Naive thymus-derived CD4-positive, alpha-beta T cell (primary cell): ENCODE measurements at regions of chr14 and their contacts with region 1.

Region 1: DNA sequence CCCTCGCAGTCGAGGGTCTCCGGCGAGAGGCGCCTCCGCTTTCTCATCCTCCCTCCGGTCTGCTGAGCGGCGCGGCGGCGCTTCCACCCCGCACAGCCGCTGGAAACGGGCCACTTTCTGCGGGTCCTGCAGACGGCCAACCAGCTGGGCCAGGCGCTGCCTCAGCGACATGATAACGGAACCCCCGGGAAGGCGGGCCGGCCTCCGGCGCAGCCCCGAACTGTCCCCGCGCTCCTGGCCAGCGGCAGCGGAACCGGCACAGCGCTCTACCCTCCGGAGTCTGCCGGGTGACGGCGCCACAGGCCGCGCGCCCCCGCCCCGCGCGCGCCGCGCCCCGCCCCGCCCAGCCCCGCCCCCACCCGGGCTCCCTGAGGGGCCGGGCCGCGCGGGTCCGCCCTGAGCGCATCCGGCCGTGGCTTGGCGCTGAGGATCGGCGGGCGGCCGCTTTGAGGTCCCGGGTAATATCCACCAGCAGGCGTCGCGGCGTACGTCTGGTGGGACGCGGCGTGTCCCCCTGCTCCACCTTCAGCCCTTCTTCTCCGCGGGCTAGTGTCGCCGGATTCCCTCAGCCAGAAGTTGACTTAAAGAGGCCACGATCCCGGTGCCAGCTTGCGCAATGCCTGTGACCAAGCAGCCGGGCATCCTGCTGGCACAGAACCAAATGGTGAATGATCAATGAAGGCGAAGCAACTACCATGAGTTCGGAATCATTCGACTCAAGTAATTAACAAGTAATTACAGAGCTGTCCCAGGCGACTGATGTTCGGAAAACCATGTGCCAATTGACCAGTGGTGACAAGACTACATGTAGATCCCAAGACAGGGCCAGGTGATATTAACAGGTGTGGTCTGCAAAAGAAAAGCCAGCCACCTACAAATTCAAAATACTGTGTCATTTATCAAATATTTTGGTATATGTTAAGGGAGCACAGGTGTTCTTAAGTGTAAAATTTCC is at the start of gene SGPP1:
- DNase-seq: peak; percentile 60 to 83 (median 77)
- ATAC-seq: peak; percentile 95
- H3K4me3 ChIP-seq: peak within 1 kb of the TSS; percentile 99
- H3K4me3 Mint-ChIP-seq: peak within 1 kb of the TSS; percentile 97 to 100 (median 99)
- H3K27ac ChIP-seq: peak within 1 kb of the TSS; percentile 89
- H3K27ac Mint-ChIP-seq: peak within 1 kb of the TSS; percentile 94 to 99 (median 97)
- H3K4me1 ChIP-seq: peaks cover 11 to 16% of the 10 kb centered on the region in 2 donors
- H3K4me1 Mint-ChIP-seq: peaks cover 29 to 51% (median 44%) of the 10 kb centered on the region in 7 donors
- H3K27me3 ChIP-seq: no peaks in the 10 kb centered on the region
- H3K27me3 Mint-ChIP-seq: peaks cover 0 to 22% (median 0%) of the 10 kb centered on the region in 5 donors
- total RNA-seq, gene SGPP1: 15.1 to 17.7 (median 15.7) TPM

Region 2: GRCh38 chr14:63632932-63633514 is 95.0 kb before region 1 on chr14:
- CTCF ChIA-PET with region 1: interaction called, 9 read pairs
- POLR2A ChIA-PET with region 1: interaction called, 5 read pairs
- intact Hi-C with region 1: loop called in 1 of 2 experiments (anchors 1 kb)
- DNase-seq: peak in 6 of 9 donors; percentile 31 to 65 (median 58)
- ATAC-seq: peak; percentile 92
- H3K4me3 ChIP-seq: no peak overlapping the region
- H3K4me3 Mint-ChIP-seq: no peak overlapping the region
- H3K27ac ChIP-seq: no peak overlapping the region
- H3K27ac Mint-ChIP-seq: peak overlapping the region in 3 of 9 donors; percentile 5 to 64 (median 42)
- H3K4me1 ChIP-seq: peaks cover 0 to 7% of the 10 kb centered on the region in 2 donors
- H3K4me1 Mint-ChIP-seq: peaks cover 29 to 78% (median 63%) of the 10 kb centered on the region in 7 donors
- H3K27me3 ChIP-seq: no peaks in the 10 kb centered on the region
- H3K27me3 Mint-ChIP-seq: no peaks in the 10 kb centered on the region

Region 3: GRCh38 chr14:63686951-63687350 is 41.1 kb before region 1 on chr14:
- CTCF ChIA-PET with region 1: no interaction called
- POLR2A ChIA-PET with region 1: interaction called, 3 read pairs
- intact Hi-C with region 1: loop called in 1 of 2 experiments (anchors 5 kb)
- DNase-seq: no peak
- ATAC-seq: no peak
- H3K4me3 ChIP-seq: no peak overlapping the region
- H3K4me3 Mint-ChIP-seq: no peak overlapping the region
- H3K27ac ChIP-seq: no peak overlapping the region
- H3K27ac Mint-ChIP-seq: peak overlapping the region in 2 of 9 donors; percentile 62 to 64
- H3K4me1 ChIP-seq: no peaks in the 10 kb centered on the region
- H3K4me1 Mint-ChIP-seq: peaks cover 0 to 5% (median 0%) of the 10 kb centered on the region in 7 donors
- H3K27me3 ChIP-seq: no peaks in the 10 kb centered on the region
- H3K27me3 Mint-ChIP-seq: no peaks in the 10 kb centered on the region

Region 4: GRCh38 chr14:63745858-63746425 is 17.9 kb after region 1 on chr14:
- CTCF ChIA-PET with region 1: interaction called, 3 read pairs
- POLR2A ChIA-PET with region 1: interaction called, 3 read pairs
- intact Hi-C with region 1: loop called in 1 of 2 experiments (anchors 1 kb)
- DNase-seq: peak in 1 of 9 donors; percentile 11
- ATAC-seq: peak; percentile 67
- H3K4me3 ChIP-seq: no peak overlapping the region
- H3K4me3 Mint-ChIP-seq: peak overlapping the region in 1 of 10 donors; percentile 1
- H3K27ac ChIP-seq: no peak overlapping the region
- H3K27ac Mint-ChIP-seq: peak overlapping the region; percentile 4 to 68 (median 54)
- H3K4me1 ChIP-seq: peaks cover 0 to 5% of the 10 kb centered on the region in 2 donors
- H3K4me1 Mint-ChIP-seq: peaks cover 8 to 18% (median 17%) of the 10 kb centered on the region in 7 donors
- H3K27me3 ChIP-seq: no peaks in the 10 kb centered on the region
- H3K27me3 Mint-ChIP-seq: peaks cover 0 to 8% (median 0%) of the 10 kb centered on the region in 5 donors

Region 5: GRCh38 chr14:63770187-63770807 is 42.2 kb after region 1 on chr14:
- CTCF ChIA-PET with region 1: interaction called, 12 read pairs
- POLR2A ChIA-PET with region 1: interaction called, 5 read pairs
- intact Hi-C with region 1: loop called (anchors 1 kb)
- DNase-seq: peak in 7 of 9 donors; percentile 37 to 71 (median 62)
- ATAC-seq: peak; percentile 89
- H3K4me3 ChIP-seq: no peak overlapping the region
- H3K4me3 Mint-ChIP-seq: no peak overlapping the region
- H3K27ac ChIP-seq: no peak overlapping the region
- H3K27ac Mint-ChIP-seq: peak overlapping the region in 2 of 9 donors; percentile 4 to 5
- H3K4me1 ChIP-seq: peaks cover 0 to 4% of the 10 kb centered on the region in 2 donors
- H3K4me1 Mint-ChIP-seq: peaks cover 0 to 20% (median 9%) of the 10 kb centered on the region in 7 donors
- H3K27me3 ChIP-seq: no peaks in the 10 kb centered on the region
- H3K27me3 Mint-ChIP-seq: peaks cover 0 to 4% (median 0%) of the 10 kb centered on the region in 5 donors